ENCODE measurements at regions of chr7 and their contacts with region 1.

Region 1: GRCh38 chr7:100673300-100673941 is at the start of gene GNB2:
- DNase-seq: peak; percentile 99
- H3K4me3 Mint-ChIP-seq: peak within 1 kb of the TSS; percentile 94
- H3K27ac Mint-ChIP-seq: peak within 1 kb of the TSS; percentile 95
- H3K4me1 Mint-ChIP-seq: peaks cover 6% of the 10 kb centered on the region
- H3K27me3 Mint-ChIP-seq: peaks cover 12% of the 10 kb centered on the region
- total RNA-seq, gene GNB2: 221 and 224 TPM in 2 replicates

Region 2: DNA sequence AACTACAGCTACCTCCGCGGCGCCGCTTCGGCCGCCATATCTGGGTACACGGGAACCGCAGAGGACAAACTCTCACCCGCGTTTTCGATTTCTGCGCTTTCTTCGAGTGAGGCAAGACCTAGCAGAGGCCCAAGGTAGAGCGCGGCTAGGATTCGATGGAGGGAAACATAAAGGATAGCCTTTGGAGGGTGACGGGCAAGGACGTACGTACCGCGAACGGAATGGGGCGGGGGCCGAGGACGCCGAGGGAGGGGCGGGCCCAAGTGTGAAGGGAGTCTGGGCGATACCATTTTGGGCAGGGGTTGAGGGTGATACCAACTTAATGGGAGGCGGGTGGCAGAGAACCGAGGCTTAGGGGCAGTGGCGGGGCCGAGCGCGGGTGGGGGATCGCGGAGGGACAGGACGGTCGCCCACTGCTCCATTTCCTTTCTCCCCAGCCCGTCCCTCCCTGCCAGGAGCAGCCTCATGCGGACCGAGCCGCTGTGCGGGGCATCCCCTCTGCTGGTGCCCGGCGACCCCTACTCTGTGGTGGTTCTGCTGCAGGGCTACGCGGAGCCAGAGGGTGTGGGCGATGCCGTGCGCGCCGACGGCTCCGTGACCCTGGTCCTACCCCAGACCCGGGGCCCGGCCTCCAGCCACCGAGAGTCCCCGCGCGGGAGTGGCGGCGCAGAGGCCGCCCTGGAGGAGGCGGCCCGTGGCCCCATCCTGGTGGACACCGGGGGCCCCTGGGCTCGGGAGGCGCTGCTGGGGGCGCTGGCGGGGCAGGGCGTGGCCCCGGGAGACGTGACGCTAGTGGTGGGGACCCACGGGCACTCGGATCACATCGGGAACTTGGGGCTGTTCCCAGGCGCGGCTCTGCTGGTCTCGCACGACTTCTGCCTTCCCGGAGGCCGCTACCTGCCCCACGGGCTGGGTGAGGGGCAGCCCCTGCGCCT is 546.2 kb before region 1 on chr7 and contains the start of gene MBLAC1:
- intact Hi-C with region 1: no loop called
- DNase-seq: peak; percentile 88
- H3K4me3 Mint-ChIP-seq: peak within 1 kb of the TSS; percentile 99
- H3K27ac Mint-ChIP-seq: peak within 1 kb of the TSS; percentile 100
- H3K4me1 Mint-ChIP-seq: peaks cover 24% of the 10 kb centered on the region
- H3K27me3 Mint-ChIP-seq: no peaks in the 10 kb centered on the region
- total RNA-seq, gene MBLAC1: 2.8 and 2.9 TPM in 2 replicates

Region 3: GRCh38 chr7:100456558-100456957 is 216.9 kb before region 1 on chr7:
- intact Hi-C with region 1: no loop called
- DNase-seq: no peak
- H3K4me3 Mint-ChIP-seq: no peak overlapping the region
- H3K27ac Mint-ChIP-seq: no peak overlapping the region
- H3K4me1 Mint-ChIP-seq: peaks cover 10% of the 10 kb centered on the region
- H3K27me3 Mint-ChIP-seq: no peaks in the 10 kb centered on the region

Region 4: GRCh38 chr7:100478966-100479665 is 194.3 kb before region 1 on chr7 and contains the start of gene TSC22D4:
- intact Hi-C with region 1: loop called (anchors 10 kb)
- DNase-seq: peak; percentile 86
- H3K4me3 Mint-ChIP-seq: peak within 1 kb of the TSS; percentile 99
- H3K27ac Mint-ChIP-seq: peak within 1 kb of the TSS; percentile 88
- H3K4me1 Mint-ChIP-seq: peaks cover 26% of the 10 kb centered on the region
- H3K27me3 Mint-ChIP-seq: no peaks in the 10 kb centered on the region
- total RNA-seq, gene TSC22D4: 103 and 106 TPM in 2 replicates

Region 5: DNA sequence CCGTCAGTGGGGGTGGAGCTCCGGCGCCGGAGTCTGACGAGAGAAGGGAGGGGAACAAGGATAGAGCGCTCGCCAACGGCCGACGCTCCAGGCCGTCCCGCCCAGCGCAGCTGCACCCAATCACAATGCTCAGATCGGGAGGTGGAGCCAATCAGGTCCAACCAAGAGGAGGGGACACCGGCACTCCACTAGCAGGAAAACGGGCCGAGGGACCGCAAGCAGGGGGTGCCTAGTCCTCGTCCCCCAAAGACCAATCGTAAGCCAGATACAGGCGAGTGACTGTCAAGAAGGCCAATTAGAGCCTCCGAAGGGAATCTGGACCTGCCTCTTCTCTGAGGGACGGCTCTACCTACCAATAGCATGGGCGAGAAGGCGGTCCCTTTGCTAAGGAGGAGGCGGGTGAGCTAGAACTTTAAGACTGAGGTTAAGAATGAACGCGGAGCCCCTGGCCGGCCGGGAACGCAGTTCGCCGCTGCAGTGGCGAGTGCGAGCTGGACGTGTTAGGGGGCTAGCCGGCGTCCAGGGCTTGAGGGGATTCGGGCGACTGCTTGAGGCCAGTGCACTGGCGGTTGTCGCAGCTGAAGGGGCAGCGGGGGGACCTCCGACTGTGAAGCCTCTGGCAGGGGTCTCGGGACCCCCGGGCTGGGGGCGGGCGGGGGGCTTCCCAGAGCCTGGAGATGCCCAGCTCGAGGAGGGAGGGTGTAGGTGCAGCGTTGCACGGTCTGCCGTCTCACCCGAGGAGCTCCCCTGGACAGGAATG is 87.0 kb before region 1 on chr7 and contains the start of gene FBXO24:
- intact Hi-C with region 1: loop called (anchors 1 kb)
- DNase-seq: peak; percentile 100
- H3K4me3 Mint-ChIP-seq: peak within 1 kb of the TSS; percentile 96
- H3K27ac Mint-ChIP-seq: peak within 1 kb of the TSS; percentile 80
- H3K4me1 Mint-ChIP-seq: peaks cover 24% of the 10 kb centered on the region
- H3K27me3 Mint-ChIP-seq: peaks cover 3% of the 10 kb centered on the region
- total RNA-seq, gene FBXO24: 0.37 and 0.91 TPM in 2 replicates

Region 6: GRCh38 chr7:100611974-100612729 is 61.3 kb before region 1 on chr7 and contains the start of gene MOSPD3:
- intact Hi-C with region 1: loop called (anchors 1 kb)
- DNase-seq: peak; percentile 98
- H3K4me3 Mint-ChIP-seq: peak within 1 kb of the TSS; percentile 97
- H3K27ac Mint-ChIP-seq: peak within 1 kb of the TSS; percentile 99
- H3K4me1 Mint-ChIP-seq: peaks cover 10% of the 10 kb centered on the region
- H3K27me3 Mint-ChIP-seq: no peaks in the 10 kb centered on the region
- total RNA-seq, gene MOSPD3: 14.1 TPM in 2 replicates

Region 7: DNA sequence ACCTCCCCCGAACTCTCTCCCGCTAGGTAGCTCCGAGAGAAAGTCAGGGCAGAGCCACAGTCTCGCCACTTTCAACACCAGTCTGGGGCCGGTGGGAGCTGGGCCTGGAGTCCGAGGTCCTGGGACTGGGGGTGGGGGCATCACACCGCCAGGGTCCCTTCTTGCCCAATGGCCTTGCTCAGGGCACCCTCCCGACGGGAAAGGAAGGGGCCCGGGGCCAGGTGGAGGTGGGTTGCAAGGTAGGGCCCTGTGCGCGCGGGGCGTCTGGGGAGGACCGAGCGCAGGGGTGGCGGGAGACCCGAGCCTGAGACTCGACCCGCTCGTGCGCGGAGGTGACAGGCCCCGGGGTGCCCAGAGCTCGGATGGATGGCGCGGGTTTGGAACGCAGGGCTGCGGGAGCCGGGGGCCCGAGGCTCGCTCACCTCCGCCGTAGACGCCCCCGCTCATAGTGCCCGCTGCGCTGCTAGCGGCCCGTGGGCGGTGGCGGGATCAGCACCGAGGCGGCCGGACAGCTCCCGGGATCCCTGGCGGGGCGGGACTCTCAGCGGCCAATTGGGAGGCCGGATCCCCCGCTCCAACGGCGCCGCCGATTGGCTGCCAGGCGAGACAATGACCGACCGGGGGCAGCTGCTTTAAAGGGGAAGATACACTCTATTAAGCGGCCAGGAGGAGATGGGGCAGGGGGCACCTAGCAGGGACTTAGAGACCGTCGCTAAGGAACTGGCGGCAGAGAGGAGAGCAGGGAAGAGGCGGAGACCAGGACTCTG is 17.3 kb before region 1 on chr7 and contains the start of gene ACTL6B:
- intact Hi-C with region 1: loop called (anchors 2 kb)
- DNase-seq: peak; percentile 64
- H3K4me3 Mint-ChIP-seq: no peak within 1 kb of the TSS
- H3K27ac Mint-ChIP-seq: no peak within 1 kb of the TSS
- H3K4me1 Mint-ChIP-seq: no peaks in the 10 kb centered on the region
- H3K27me3 Mint-ChIP-seq: peaks cover 21% of the 10 kb centered on the region
- total RNA-seq, gene ACTL6B: not detected in 2 replicates

Region 8: GRCh38 chr7:100705753-100706671 is 32.6 kb after region 1 on chr7 and contains the start of gene POP7:
- intact Hi-C with region 1: loop called (anchors 1 kb)
- DNase-seq: peak; percentile 98
- H3K4me3 Mint-ChIP-seq: peak within 1 kb of the TSS; percentile 99
- H3K27ac Mint-ChIP-seq: peak within 1 kb of the TSS; percentile 97
- H3K4me1 Mint-ChIP-seq: peaks cover 6% of the 10 kb centered on the region
- H3K27me3 Mint-ChIP-seq: peaks cover 6% of the 10 kb centered on the region
- total RNA-seq, gene POP7: 67.6 and 68.7 TPM in 2 replicates

Measured in activated T-helper 2 cell treated with anti-CD3 and anti-CD28 coated beads, Interferon-gamma antibody, Interleukin-2, Interleukin-4, amounts not matched to agents 10 μg/mL and 5 μg/mL and 100 μg/mL, durations not matched to agents 14 hours and 24 hours and 36 hours (primary cell).